Thyroid gland (tissue), 4 donors: ENCODE measurements at regions of chr2 and their contacts with region 1.

Region 1: GRCh38 chr2:55721596-55722215 is 28.1 kb upstream of the PNPT1 start:
- DNase-seq: no peak
- H3K4me3 ChIP-seq: no peak overlapping the region
- H3K27ac ChIP-seq: no peak overlapping the region
- H3K4me1 ChIP-seq: peaks cover 0 to 4% of the 10 kb centered on the region in 2 donors
- H3K27me3 ChIP-seq: no peaks in the 10 kb centered on the region
- CTCF ChIP-seq: no peak
- POLR2A ChIP-seq: no peak

Region 2: DNA sequence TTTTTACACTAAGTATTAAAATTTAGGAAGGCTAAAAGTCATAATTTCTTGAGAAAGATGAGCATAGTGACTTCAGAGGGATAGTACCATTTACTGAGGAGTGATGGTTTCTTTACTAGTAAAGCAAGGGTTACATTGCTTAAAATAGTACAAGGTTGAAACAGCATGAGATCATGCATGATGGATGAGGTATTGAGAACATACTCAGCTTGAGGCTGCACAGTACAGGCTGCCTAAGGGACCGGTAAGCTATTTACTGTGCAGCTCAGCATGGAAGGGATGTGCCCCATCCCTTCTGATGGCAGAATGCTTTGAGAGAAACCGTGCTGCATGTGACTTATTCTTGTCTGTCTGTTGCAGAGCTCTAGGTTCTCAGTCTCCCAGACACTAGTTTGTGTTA is 876.2 kb before region 1 on chr2:
- intact Hi-C with region 1: no loop called
- DNase-seq: no peak
- H3K4me3 ChIP-seq: no peak overlapping the region
- H3K27ac ChIP-seq: no peak overlapping the region
- H3K4me1 ChIP-seq: no peaks in the 10 kb centered on the region
- H3K27me3 ChIP-seq: no peaks in the 10 kb centered on the region
- CTCF ChIP-seq: no peak
- POLR2A ChIP-seq: no peak

Region 3: DNA sequence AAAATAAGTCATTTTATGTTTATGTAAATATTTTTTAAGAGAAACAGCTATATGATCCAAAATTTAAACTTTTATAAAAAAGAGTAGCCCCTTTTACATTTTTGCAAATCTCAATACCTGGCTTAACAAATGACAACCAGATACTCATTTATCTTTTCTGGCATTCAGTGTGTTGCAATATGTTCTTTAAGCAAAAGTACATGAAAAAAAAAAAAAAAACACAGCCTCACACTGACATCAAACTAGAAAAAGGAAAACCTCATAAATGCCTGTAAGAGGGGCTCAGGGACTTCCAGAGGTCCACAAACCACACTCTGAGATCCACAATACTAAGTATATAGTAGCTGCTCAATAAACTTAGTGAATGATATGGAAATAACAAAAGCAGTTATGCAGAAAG is 126.2 kb before region 1 on chr2:
- intact Hi-C with region 1: no loop called
- DNase-seq: no peak
- H3K4me3 ChIP-seq: no peak overlapping the region
- H3K27ac ChIP-seq: no peak overlapping the region
- H3K4me1 ChIP-seq: no peaks in the 10 kb centered on the region
- H3K27me3 ChIP-seq: no peaks in the 10 kb centered on the region
- CTCF ChIP-seq: no peak
- POLR2A ChIP-seq: no peak

Region 4: GRCh38 chr2:55901325-55901724 is 179.6 kb after region 1 on chr2:
- intact Hi-C with region 1: no loop called
- DNase-seq: no peak
- H3K4me3 ChIP-seq: no peak overlapping the region
- H3K27ac ChIP-seq: peak overlapping the region in 1 of 3 donors; percentile 45
- H3K4me1 ChIP-seq: peaks cover 11 to 16% of the 10 kb centered on the region in 2 donors
- H3K27me3 ChIP-seq: no peaks in the 10 kb centered on the region
- CTCF ChIP-seq: no peak
- POLR2A ChIP-seq: no peak

Region 5: DNA sequence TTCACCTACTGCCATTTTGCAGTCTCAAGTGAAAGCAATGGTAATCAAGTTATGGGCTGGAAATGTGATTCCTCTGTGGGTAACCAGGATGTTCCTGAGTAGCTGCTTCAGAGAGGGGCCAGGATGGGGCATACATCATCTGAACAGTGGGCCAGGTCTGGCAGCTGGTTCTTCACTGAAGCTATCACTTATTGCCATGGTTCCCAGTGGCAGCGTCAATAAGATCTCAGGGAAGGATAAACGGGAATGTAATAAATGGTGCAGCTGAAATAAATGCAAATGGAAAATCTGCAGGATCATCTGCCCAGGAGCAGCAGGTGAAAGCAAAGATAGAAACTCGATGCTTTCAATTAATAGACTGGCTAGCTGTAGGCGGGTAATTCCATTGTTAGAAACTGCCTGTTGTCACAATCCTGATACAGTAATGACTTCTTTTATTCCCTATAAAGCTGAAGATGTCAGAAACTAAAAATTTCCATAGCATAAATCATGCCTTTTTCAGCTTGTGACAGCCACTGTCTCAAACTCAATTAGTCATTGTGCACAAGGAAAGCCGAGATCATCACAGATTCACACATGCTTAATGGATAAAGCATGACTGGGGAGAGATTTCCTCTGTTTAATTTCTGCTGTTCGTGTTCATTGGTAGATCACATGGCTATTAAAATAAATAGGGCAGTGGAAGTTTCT is 405.9 kb after region 1 on chr2:
- intact Hi-C with region 1: loop called (anchors 10 kb)
- DNase-seq: no peak
- H3K4me3 ChIP-seq: no peak overlapping the region
- H3K27ac ChIP-seq: no peak overlapping the region
- H3K4me1 ChIP-seq: no peaks in the 10 kb centered on the region
- H3K27me3 ChIP-seq: no peaks in the 10 kb centered on the region
- CTCF ChIP-seq: no peak
- POLR2A ChIP-seq: no peak